ENCODE measurements at regions of chr9 and their contacts with region 1.

Region 1: GRCh38 chr9:133144137-133144903 is 19.4 kb downstream of the GBGT1 start:
- DNase-seq: peak in 1 of 2 donors; percentile 96
- H3K4me3 ChIP-seq: no peak overlapping the region
- CTCF ChIP-seq: peak in 1 of 3 donors; percentile 79
- POLR2A ChIP-seq: no peak

Region 2: DNA sequence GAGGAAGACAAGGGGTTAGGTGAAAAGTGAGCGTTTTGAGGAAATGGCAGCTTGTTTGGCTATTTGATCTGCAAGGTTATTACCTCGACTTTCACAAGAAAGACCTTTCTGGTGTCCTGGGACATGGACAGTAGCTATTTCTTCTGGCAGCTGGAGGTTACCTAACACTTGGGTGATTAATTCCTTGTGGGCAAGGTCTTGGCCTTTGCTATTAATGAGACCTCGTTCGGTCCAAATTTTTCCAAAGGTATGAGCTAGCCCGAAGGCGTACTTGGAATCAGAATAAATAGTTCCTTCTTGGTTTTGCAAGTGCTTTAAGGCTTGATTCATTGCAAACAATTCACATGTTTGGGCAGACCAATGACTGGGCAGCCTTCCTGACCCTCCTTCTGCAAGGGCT is 108.7 kb before region 1 on chr9:
- intact Hi-C with region 1: loop called (anchors 5 kb)
- DNase-seq: no peak
- H3K4me3 ChIP-seq: no peak overlapping the region
- CTCF ChIP-seq: no peak
- POLR2A ChIP-seq: no peak

Region 3: DNA sequence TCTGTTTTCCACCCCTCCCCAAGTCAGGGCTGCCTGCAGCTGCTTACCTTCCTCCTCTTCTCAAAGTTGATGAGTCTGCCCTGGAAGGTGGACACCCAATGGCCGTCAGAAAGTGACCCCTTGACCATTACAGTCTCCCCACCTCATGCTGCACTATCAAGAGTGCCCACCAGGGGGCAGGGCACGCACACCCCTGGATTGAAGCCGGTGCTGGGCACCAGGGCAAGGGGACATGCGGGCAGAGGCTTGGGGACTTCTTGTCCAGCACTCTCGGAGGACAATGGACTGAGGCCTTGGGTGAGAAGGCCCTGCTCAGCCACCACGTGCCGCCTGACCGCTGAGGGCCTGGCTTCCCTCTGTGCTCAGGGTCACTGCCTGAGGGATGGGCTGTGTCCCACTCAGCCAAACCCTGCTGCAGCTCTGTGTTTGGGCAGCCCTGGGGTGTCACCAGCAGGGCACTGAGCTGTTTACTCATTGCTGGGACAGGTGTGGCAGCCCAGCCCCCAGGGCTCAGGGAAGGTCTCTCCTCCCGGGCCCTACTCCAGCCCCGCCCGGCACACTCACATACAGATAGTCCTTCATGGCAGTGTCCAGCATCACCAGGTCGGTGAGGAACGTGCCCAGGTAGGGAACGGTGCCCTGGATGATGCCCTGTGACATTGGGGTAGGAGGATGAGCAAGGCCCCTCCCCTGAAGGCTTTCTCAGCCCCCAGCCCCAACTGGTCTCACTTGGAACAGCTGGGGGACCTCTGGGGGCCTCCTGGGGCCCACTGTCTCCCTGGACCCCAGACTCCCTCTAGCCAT is 40.9 kb before region 1 on chr9:
- intact Hi-C with region 1: loop called (anchors 2 kb)
- DNase-seq: peak in 1 of 2 donors; percentile 93
- H3K4me3 ChIP-seq: no peak overlapping the region
- CTCF ChIP-seq: peak in 1 of 3 donors; percentile 65
- POLR2A ChIP-seq: no peak

Region 4: GRCh38 chr9:133375724-133376654 is 231.7 kb after region 1 on chr9 and contains the starts of genes STKLD1 and SURF4:
- intact Hi-C with region 1: no loop called
- DNase-seq: peak; percentile 93 to 99
- H3K4me3 ChIP-seq: peak within 1 kb of the TSS; percentile 99
- CTCF ChIP-seq: no peak
- POLR2A ChIP-seq: peak in 1 of 2 donors; percentile 38
- total RNA-seq, gene STKLD1: 0.54 to 7.0 (median 3.7) TPM in 3 of 4 donors, not detected in the other
- total RNA-seq, gene SURF4: 84.2 to 114 (median 100) TPM

Region 5: DNA sequence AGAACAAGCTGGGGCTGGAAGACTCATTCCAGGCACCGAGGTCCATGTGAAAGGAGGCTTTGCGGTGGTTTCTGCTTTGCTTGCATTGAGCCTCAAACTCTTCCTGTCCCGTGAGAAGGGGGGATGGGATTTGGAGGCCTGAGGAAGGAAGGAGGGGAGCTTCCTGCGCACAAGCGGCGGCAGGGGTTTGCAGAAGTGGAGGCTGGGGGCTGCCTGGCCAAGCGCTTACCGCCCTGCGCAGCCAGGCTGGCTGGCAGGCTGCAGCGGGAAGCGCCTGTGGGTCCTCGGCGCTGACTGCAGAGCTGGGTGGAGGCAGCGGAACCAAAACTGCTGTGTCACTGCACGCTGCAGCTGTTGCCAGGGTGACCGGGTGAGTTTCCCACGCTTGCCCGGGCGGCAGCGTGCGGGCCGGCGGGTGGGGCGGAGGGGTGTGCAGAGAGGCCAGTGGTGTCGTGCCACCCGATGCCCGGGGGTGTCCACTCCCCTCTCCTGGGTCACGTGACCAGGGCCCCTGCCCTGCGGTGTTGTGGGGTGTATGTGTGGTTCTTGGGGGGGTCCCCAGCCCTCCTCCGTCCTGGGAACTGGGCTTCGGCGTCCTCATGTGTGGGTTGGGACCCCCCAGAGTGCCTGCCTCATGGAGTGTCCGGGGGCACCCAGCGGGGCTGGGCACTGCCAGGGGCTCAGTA is 1262.9 kb after region 1 on chr9:
- intact Hi-C with region 1: no loop called
- DNase-seq: peak; percentile 86 to 96
- H3K4me3 ChIP-seq: no peak overlapping the region
- CTCF ChIP-seq: no peak
- POLR2A ChIP-seq: no peak

Region 6: DNA sequence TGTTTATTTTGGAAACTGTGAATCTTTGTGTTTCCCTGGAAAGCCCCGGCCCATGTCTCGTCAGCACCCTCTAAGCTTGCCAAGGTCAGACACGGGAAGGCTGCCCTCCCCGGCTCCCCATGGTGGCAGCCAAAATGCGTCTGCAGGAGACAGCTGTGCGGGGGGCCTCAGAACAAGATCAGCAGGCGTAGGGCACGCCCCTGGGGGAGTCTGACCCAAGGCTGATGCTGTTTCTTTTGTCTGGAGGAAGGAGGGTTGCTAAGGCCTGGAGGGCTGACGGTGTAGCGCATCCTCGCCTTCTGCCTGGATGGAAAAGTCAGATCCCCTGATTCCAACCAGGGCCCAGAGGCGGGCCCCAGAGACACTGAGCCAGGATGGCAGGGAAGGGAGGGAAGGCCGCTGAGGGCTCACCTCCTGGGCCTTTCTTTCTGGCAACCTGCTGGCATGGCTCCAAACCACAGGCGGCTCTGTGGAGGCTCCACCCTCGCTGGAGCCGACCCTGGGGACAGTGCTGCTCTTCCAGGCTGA is 2000.3 kb after region 1 on chr9:
- intact Hi-C with region 1: no loop called
- DNase-seq: no peak
- H3K4me3 ChIP-seq: no peak overlapping the region
- CTCF ChIP-seq: no peak
- POLR2A ChIP-seq: no peak

Measured in lower leg skin (tissue), 4 donors.